GM12878 (cell line): ENCODE measurements at regions of chr13 and their contacts with region 1.

Region 1: DNA sequence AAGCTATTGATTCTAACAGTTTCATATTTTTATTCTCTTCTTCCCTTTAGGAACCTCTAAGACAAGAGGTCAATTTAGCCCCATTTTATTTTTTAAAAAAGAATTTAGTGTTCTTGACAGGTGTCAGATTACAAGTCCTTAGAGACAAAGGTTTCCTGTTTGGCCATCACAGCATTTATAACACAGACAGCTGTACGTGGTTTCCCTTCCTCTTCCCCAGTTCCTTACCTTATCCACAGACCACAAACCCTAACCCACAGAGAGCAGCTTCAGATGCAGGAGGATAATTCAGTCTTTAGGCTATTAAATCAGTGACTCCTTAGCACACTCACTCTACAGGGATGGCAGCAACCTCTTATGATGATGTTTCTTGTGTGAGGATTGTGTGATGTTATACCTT is 1210.1 kb downstream of the DIAPH3 start:
- DNase-seq: peak; percentile 87
- ATAC-seq: peak; percentile 76
- H3K4me3 ChIP-seq: no peak overlapping the region
- H3K27ac ChIP-seq: peak overlapping the region; percentile 18; the same call in 1 of the 2 replicates
- H3K4me1 ChIP-seq: no peaks in the 10 kb centered on the region; the same call in 1 of the 2 replicates
- H3K27me3 ChIP-seq: no peaks in the 10 kb centered on the region
- CTCF ChIP-seq: no peak
- EP300 ChIP-seq: peak; percentile 99
- POLR2A ChIP-seq: no peak
- RAD21 ChIP-seq: no peak

Region 2: DNA sequence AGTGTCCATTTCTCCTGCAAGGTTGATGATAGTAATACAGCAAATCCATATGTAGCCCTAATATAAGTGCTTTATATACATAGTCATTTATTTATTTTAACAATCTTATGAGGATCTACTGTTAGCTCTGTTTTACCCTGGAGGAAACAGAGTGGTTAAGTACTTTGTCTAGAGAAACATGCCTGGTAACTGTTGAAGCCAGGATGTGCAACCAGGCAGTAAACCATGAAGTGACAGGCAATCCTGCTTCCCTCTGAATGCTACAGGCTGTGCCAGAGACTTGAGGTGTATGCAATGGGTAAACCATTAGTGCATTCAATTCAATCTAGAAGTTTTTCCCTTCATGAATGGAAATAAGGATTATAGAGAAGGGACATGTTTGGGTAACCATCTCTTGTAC is 411.1 kb before region 1 on chr13:
- CTCF ChIA-PET with region 1: no interaction called
- POLR2A ChIA-PET with region 1: no interaction called
- RAD21 ChIA-PET with region 1: no interaction called
- SMC1A ChIA-PET with region 1: no interaction called
- in situ Hi-C with region 1: no loop called
- intact Hi-C with region 1: loop called (anchors 10 kb)
- DNase-seq: no peak
- ATAC-seq: peak; percentile 78
- H3K4me3 ChIP-seq: no peak overlapping the region
- H3K27ac ChIP-seq: no peak overlapping the region
- H3K4me1 ChIP-seq: no peaks in the 10 kb centered on the region
- H3K27me3 ChIP-seq: no peaks in the 10 kb centered on the region
- CTCF ChIP-seq: no peak
- EP300 ChIP-seq: no peak
- POLR2A ChIP-seq: no peak
- RAD21 ChIP-seq: no peak

Region 3: GRCh38 chr13:58587183-58587582 is 366.5 kb before region 1 on chr13:
- CTCF ChIA-PET with region 1: no interaction called
- POLR2A ChIA-PET with region 1: no interaction called
- RAD21 ChIA-PET with region 1: no interaction called
- SMC1A ChIA-PET with region 1: no interaction called
- in situ Hi-C with region 1: no loop called
- intact Hi-C with region 1: loop called (anchors 2 kb)
- DNase-seq: peak; percentile 9
- ATAC-seq: peak; percentile 98
- H3K4me3 ChIP-seq: no peak overlapping the region
- H3K27ac ChIP-seq: no peak overlapping the region
- H3K4me1 ChIP-seq: no peaks in the 10 kb centered on the region
- H3K27me3 ChIP-seq: no peaks in the 10 kb centered on the region
- CTCF ChIP-seq: no peak
- EP300 ChIP-seq: peak; percentile 62 to 91; a peak in 3 of 4 replicates
- POLR2A ChIP-seq: no peak
- RAD21 ChIP-seq: no peak

Region 4: DNA sequence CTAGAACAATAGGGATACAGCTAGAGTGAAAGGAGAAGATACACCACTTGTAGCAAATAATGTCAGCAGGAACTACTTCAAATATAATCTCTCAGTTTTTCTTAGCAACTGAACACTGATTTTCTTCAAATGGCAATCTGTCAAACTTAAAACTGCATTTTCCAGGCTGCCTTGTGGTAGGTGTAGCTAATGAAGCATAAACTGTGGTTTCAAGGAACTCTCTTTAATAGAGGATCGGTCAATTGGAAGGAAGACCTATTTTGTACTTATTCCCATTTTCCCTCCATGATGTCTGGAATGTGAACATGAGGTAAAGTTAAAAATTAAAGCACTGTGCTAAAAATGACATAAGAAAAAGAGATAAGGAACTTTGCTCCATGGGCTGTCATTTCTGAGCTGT is 60.2 kb before region 1 on chr13:
- CTCF ChIA-PET with region 1: interaction called, 4 read pairs
- POLR2A ChIA-PET with region 1: no interaction called
- RAD21 ChIA-PET with region 1: interaction called, 6 read pairs
- SMC1A ChIA-PET with region 1: interaction called, 6 read pairs
- in situ Hi-C with region 1: no loop called
- intact Hi-C with region 1: loop called (anchors 5 kb)
- DNase-seq: no peak
- ATAC-seq: no peak
- H3K4me3 ChIP-seq: no peak overlapping the region
- H3K27ac ChIP-seq: no peak overlapping the region
- H3K4me1 ChIP-seq: no peaks in the 10 kb centered on the region
- H3K27me3 ChIP-seq: no peaks in the 10 kb centered on the region
- CTCF ChIP-seq: no peak
- EP300 ChIP-seq: no peak
- POLR2A ChIP-seq: no peak
- RAD21 ChIP-seq: no peak

Region 5: DNA sequence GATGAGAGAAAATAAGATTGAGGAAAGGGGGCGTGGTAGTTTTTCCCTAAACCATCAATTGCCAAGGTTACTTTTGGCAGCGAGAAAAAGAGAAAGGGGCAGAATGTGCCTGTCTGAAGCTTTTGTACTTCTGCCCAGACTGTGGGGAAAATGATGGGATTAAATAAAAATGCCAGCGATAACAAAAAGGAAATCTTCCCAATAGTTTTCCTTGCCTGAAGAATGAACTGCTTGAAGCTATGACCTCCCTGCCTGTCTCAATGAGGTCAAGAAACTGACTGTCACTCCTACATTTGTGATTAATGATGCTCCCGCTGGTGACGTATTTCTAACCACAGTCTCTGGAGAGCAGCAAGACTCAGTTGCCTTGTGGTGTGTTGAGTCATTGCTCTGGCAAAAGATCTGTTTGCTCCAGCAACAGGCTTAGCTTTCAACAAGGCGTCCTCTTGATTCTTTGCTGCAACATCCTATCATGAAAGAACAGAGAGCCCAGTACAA is 158.6 kb after region 1 on chr13:
- CTCF ChIA-PET with region 1: no interaction called
- POLR2A ChIA-PET with region 1: no interaction called
- RAD21 ChIA-PET with region 1: no interaction called
- SMC1A ChIA-PET with region 1: no interaction called
- in situ Hi-C with region 1: no loop called
- intact Hi-C with region 1: no loop called
- DNase-seq: no peak
- ATAC-seq: peak; percentile 68
- H3K4me3 ChIP-seq: no peak overlapping the region
- H3K27ac ChIP-seq: no peak overlapping the region
- H3K4me1 ChIP-seq: no peaks in the 10 kb centered on the region
- H3K27me3 ChIP-seq: no peaks in the 10 kb centered on the region
- CTCF ChIP-seq: no peak
- EP300 ChIP-seq: no peak
- POLR2A ChIP-seq: no peak
- RAD21 ChIP-seq: no peak

Region 6: DNA sequence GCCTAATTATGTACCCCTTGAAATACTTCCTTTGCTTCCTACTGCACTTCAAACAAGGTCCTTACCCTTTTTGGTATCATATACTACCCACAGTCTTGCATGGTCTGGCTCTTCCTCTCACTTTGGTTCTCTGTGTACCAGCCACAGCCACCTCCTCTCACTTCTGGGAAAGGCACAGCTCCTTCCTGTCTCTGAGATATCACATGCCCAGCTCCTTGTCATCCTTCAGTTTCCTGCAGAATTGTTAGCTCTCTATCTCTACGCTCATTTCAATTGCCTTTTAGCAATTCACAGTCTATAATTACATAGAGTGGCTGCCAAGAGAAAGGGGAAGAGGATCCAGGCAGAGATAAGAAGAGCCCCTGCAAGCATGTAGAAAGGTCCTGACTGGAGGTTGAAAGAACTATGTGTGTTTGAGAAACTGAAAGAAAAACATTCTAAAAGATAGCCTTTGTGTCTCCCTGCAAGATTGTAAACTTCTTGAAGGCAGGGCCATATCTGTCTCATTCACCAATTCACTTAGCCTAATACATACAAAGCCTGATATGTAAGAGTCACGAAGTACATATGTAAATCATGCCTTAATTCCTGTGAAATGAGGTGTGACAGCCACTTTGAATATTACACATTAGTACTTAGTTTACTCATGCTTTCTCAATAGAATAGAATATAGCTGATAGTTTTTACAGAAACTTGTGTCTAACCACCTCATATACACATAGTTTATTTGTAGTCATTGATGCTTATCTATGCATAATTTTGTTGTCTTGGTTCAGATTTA is 277.0 kb after region 1 on chr13:
- CTCF ChIA-PET with region 1: no interaction called
- POLR2A ChIA-PET with region 1: no interaction called
- RAD21 ChIA-PET with region 1: no interaction called
- SMC1A ChIA-PET with region 1: no interaction called
- in situ Hi-C with region 1: no loop called
- intact Hi-C with region 1: no loop called
- DNase-seq: no peak
- ATAC-seq: peak; percentile 23
- H3K4me3 ChIP-seq: no peak overlapping the region
- H3K27ac ChIP-seq: no peak overlapping the region
- H3K4me1 ChIP-seq: no peaks in the 10 kb centered on the region
- H3K27me3 ChIP-seq: no peaks in the 10 kb centered on the region
- CTCF ChIP-seq: no peak
- EP300 ChIP-seq: no peak
- POLR2A ChIP-seq: no peak
- RAD21 ChIP-seq: no peak